PC-9 (cell line): ENCODE measurements at regions of chr9 and their contacts with region 1.

Region 1: GRCh38 chr9:5416962-5417361 is 20.8 kb downstream of the PLGRKT start:
- DNase-seq: no peak
- H3K4me3 ChIP-seq: no peak overlapping the region
- H3K27ac ChIP-seq: no peak overlapping the region
- H3K4me1 ChIP-seq: no peaks in the 10 kb centered on the region
- H3K27me3 ChIP-seq: no peaks in the 10 kb centered on the region
- CTCF ChIP-seq: no peak

Region 2: GRCh38 chr9:4894076-4894475 is 522.9 kb before region 1 on chr9:
- CTCF ChIA-PET with region 1: no interaction called
- POLR2A ChIA-PET with region 1: no interaction called
- intact Hi-C with region 1: no loop called
- DNase-seq: no peak
- H3K4me3 ChIP-seq: no peak overlapping the region
- H3K27ac ChIP-seq: no peak overlapping the region
- H3K4me1 ChIP-seq: no peaks in the 10 kb centered on the region
- H3K27me3 ChIP-seq: no peaks in the 10 kb centered on the region
- CTCF ChIP-seq: no peak

Region 3: DNA sequence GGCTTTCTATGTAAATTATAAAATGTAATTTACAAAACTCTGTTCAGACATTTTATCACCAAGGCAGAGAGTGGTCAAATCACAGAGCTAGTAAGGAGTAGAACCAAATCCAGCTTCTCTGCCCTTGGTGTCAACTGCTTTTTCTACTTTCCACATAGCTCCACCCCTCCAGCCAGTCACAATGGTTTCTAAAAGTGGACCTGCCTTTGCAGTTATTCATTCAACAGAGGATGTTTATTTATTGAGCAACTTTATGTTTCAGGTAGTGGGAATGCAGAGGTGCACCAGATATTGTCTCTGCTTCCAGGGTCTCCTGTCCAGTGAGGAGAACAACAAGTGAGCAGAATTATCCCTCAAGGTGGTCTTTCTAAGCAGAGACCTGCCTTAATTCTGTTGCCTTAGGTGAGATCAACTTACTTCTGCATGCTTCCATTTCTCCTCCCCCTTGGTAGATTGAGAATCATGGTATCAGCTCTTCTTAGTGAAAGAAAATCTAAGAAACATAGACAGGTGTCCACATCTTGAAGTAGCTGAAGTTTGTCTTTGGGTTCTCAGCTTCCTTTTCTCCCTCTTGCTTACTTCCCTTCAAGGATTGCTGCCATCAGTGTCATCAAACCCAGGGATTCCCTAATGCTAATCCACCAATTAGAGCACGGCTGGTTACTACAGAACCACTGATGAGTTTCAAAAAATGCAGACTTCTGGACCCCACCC is 76.2 kb after region 1 on chr9:
- CTCF ChIA-PET with region 1: interaction called, 11 read pairs
- POLR2A ChIA-PET with region 1: no interaction called
- intact Hi-C with region 1: no loop called
- DNase-seq: peak in 1 of 2 experiments; percentile 51
- H3K4me3 ChIP-seq: no peak overlapping the region
- H3K27ac ChIP-seq: peak overlapping the region; percentile 88
- H3K4me1 ChIP-seq: peaks cover 25% of the 10 kb centered on the region
- H3K27me3 ChIP-seq: no peaks in the 10 kb centered on the region
- CTCF ChIP-seq: no peak